ENCODE measurements at regions of chr1 and their contacts with region 1.

Region 1: GRCh38 chr1:45750298-45751038 is at the start of gene IPP:
- DNase-seq: peak; percentile 97
- ATAC-seq: peak; percentile 99
- H3K4me3 ChIP-seq: peak within 1 kb of the TSS; percentile 84
- H3K27ac ChIP-seq: peak within 1 kb of the TSS; percentile 86
- H3K4me1 ChIP-seq: 0 out of 2 replicates have a peak, but pooled peaks cover 1% of the 10 kb centered on the region
- H3K27me3 ChIP-seq: no peaks in the 10 kb centered on the region
- CTCF ChIP-seq: peak; percentile 31
- POLR2A ChIP-seq: peak; percentile 96
- RAD21 ChIP-seq: peak; percentile 37
- total RNA-seq, gene IPP: 10.6 and 15.8 TPM in 2 replicates

Region 2: DNA sequence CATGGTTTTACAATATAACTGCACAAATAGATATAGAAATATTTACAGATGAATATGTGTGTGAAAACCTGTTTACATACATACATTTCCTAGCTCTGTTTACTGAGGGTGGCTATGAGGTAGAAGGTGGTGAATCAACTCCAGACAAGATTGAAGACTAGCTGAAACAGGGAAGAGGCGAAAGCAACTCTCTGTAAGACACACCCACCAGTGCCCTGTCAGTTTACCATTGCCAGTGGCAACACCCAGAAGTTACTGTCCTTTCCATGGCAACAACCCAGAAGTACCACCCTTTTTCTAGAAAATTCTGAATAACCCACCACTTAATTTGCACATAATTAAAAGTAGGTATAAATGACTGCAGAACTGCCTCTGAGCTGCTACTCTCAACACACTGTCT is 45.8 kb before region 1 on chr1:
- CTCF ChIA-PET with region 1: no interaction called
- POLR2A ChIA-PET with region 1: no interaction called
- dilution Hi-C with region 1: no loop called
- in situ Hi-C with region 1: loop called (anchors 5 kb)
- intact Hi-C with region 1: no loop called
- DNase-seq: no peak
- ATAC-seq: no peak
- H3K4me3 ChIP-seq: no peak overlapping the region
- H3K27ac ChIP-seq: no peak overlapping the region
- H3K4me1 ChIP-seq: no peaks in the 10 kb centered on the region
- H3K27me3 ChIP-seq: no peaks in the 10 kb centered on the region
- CTCF ChIP-seq: no peak
- POLR2A ChIP-seq: no peak
- RAD21 ChIP-seq: no peak

Measured in IMR-90 (cell line).